HEK293T (cell line): ENCODE measurements at regions of chr1 and their contacts with region 1.

Region 1: DNA sequence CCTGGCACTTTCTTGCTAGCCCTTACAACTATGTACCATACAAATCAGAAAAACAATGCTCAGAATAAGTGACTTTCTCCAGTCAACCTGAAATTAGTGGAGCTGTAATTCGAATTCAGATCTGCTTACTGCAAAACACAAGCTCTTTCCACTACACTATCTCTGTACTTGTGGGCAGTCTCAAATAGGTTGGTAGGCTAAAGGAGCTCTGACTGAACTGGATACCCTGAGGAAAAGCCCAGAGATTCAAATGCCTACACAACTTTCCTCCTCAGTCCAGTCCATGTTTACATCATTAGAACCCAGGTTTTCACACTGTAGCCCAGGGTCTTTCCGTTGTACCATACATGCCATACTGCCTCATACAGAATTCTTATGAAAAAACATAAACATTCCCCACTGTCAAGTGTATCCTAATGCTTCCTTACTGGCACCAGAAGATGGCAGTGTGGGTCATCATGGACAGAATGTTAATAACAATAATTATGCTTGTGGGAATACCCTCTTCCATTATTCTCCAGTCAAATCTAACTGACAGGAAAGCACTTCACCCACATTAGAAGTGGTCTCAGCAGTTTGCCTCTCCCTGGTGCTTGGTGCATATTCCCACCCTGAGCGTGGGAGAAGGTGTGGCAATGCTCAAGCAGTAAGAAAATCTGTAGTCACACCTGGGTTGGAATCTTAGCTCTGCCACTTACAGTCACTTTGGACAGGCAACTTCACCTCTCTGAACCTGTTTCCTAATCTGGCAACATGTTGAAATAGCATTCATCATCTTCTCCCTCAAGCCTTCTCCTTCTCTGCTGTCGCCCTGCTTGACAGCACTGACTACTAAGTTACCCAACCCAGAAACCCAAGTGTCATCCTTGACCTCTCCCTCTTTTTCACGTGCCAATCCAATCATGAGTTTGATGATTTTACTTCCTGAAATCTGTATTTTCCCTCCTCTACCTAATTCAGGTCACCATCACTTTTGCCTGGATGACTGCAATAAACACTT is 14.4 kb upstream of the ZFYVE9 start:
- DNase-seq: peak; percentile 55

Region 2: GRCh38 chr1:52022133-52022532 is 105.3 kb before region 1 on chr1:
- CTCF ChIA-PET with region 1: no interaction called
- POLR2A ChIA-PET with region 1: no interaction called
- DNase-seq: no peak

Region 3: DNA sequence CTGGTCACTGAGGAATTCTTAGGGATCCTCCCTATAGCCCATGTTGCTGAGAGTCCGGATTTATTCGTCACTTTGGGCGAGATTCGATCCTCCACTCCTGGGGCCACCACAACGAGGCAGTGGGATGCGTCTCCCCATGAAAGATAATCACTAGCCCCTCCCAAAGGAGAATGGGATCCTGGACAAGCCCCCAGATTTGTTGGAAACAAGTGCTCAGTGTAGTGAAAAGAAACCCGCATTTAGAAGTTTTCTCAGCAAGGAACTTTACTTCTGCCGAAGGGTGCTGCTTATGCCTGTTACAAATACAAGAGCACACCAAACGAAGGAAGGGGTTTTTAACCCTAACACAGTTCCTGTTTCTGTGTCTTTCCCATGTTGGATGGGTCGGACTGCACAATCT is 97.7 kb after region 1 on chr1:
- CTCF ChIA-PET with region 1: no interaction called
- POLR2A ChIA-PET with region 1: no interaction called
- DNase-seq: no peak

Region 4: DNA sequence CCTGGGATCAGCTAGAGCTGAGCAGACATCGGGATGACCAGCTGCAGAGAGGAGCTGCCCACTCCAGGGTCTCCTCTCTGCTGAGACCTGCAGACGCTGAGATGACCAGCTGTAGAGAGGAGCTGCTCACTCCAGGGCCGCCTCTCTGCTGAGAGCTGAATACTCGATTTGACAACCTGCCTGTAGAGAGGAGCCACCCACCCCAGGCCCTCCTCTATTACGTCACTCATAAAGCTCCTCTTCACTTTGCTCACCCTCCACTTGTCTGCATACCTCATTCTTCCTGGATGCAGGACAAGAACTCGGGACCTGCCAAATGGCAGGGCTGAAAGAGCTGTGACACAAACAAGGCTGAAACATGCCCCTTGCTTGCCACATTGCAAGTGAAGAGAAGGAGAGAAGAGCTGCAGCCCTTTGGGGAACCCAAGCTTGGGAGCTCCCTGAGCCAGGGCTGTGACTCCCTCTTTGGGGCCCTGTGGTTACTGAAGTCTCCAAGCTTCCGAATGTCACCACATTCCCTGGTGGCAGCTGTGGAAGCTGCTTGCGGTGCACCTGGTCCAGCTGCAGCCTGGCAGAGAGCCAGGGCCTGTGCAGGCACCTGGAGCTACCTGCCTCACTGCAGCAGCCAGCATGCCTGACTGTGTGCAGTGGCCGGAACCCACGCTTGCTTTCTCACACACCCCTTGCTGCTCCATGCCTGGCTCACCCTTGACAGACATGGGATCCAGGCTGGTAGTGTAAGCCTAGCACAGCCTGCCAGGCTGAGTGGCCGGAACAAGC is 178.9 kb after region 1 on chr1:
- CTCF ChIA-PET with region 1: interaction called, 10 read pairs
- POLR2A ChIA-PET with region 1: no interaction called
- DNase-seq: no peak